ENCODE measurements at regions of chr2 and their contacts with region 1.

Region 1: DNA sequence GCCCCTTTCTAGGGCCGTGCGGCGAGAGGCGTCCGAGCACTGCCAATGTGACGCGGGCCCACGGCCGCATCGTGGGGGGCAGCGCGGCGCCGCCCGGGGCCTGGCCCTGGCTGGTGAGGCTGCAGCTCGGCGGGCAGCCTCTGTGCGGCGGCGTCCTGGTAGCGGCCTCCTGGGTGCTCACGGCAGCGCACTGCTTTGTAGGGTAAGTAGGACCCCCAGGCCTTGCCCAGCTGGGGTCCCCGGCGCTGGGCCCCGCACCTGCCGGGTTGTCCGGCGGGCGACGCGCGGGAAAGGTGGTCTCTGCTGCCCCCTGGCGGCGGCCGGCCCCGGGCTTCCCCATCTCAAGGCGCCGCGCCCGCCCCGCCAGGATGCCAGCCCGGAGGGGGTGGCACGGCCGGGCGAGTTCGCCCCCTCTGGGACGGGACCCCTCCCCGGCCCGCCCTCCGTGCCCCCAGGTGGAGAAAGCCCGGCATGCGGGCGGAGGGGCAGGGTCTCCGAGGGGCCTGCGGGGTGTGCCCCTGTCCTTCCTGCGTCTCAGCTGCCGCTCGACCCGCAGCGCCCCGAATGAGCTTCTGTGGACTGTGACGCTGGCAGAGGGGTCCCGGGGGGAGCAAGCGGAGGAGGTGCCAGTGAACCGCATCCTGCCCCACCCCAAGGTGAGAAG is 1.9 kb downstream of the PRSS56 start:
- DNase-seq: peak in 1 of 2 experiments; percentile 94
- H3K4me3 ChIP-seq: peak overlapping the region in 3 of 4 experiments; percentile 23 to 55 (median 32); a peak in 6 of 8 replicates
- H3K27ac ChIP-seq: no peak overlapping the region
- H3K4me1 ChIP-seq: peaks cover 0 to 22% (median 9%) of the 10 kb centered on the region in 4 experiments; a peak in 6 of 7 replicates
- H3K27me3 ChIP-seq: peaks cover 19 to 43% (median 37%) of the 10 kb centered on the region in 4 experiments
- CTCF ChIP-seq: peak in 2 of 3 experiments; percentile 56 to 88; a peak in 3 of 4 replicates
- EP300 ChIP-seq: no peak
- POLR2A ChIP-seq: no peak
- RAD21 ChIP-seq: peak; percentile 79 to 90

Region 2: GRCh38 chr2:232333361-232334270 is 188.5 kb before region 1 on chr2:
- CTCF ChIA-PET with region 1: interaction called, 10 read pairs
- POLR2A ChIA-PET with region 1: no interaction called
- DNase-seq: peak in 1 of 2 experiments; percentile 76
- H3K4me3 ChIP-seq: no peak overlapping the region
- H3K27ac ChIP-seq: no peak overlapping the region
- H3K4me1 ChIP-seq: peaks cover 0 to 9% (median 6%) of the 10 kb centered on the region in 4 experiments; a peak in 4 of 7 replicates
- H3K27me3 ChIP-seq: no peaks in the 10 kb centered on the region
- CTCF ChIP-seq: peak in 2 of 3 experiments; percentile 65 to 69; a peak in 3 of 4 replicates
- EP300 ChIP-seq: no peak
- POLR2A ChIP-seq: no peak
- RAD21 ChIP-seq: no peak; a peak in 1 of 4 replicates

Region 3: GRCh38 chr2:232444409-232445148 is 77.5 kb before region 1 on chr2:
- CTCF ChIA-PET with region 1: interaction called, 108 read pairs
- POLR2A ChIA-PET with region 1: interaction called, 5 read pairs
- DNase-seq: peak; percentile 44 to 82
- H3K4me3 ChIP-seq: no peak overlapping the region
- H3K27ac ChIP-seq: no peak overlapping the region
- H3K4me1 ChIP-seq: peaks cover 0 to 12% (median 5%) of the 10 kb centered on the region in 4 experiments; a peak in 5 of 7 replicates
- H3K27me3 ChIP-seq: no peaks in the 10 kb centered on the region; a peak in 2 of 7 replicates
- CTCF ChIP-seq: peak; percentile 70 to 88 (median 80)
- EP300 ChIP-seq: no peak
- POLR2A ChIP-seq: no peak
- RAD21 ChIP-seq: peak in 1 of 2 experiments; percentile 38; a peak in 2 of 4 replicates

Region 4: GRCh38 chr2:232458661-232459418 is 63.3 kb before region 1 on chr2:
- CTCF ChIA-PET with region 1: interaction called, 54 read pairs
- POLR2A ChIA-PET with region 1: interaction called, 3 read pairs
- DNase-seq: no peak
- H3K4me3 ChIP-seq: no peak overlapping the region
- H3K27ac ChIP-seq: no peak overlapping the region
- H3K4me1 ChIP-seq: peaks cover 0 to 3% (median 0%) of the 10 kb centered on the region in 4 experiments; a peak in 1 of 7 replicates
- H3K27me3 ChIP-seq: no peaks in the 10 kb centered on the region
- CTCF ChIP-seq: no peak
- EP300 ChIP-seq: no peak
- POLR2A ChIP-seq: no peak
- RAD21 ChIP-seq: no peak

Region 5: DNA sequence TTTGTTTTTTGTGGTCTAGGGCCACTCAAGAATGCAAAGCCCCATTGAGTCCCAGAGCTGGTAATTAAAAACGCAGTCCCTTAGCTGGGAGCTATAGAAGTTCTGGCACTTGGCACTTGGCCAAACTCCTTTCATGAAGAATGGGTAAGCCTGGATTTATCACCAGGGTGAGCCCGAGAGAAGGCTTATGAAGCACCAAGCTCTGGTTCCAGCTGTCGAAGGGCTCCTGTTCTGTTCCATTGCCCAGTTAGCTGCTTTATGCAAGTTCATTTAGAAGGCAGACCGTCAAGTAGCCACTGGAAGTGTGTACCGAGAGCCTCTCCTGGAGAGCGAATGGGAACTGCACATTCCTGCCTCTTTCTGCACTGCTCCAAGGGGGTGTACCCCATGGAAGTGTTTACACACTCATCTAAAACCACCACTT is 48.6 kb before region 1 on chr2:
- CTCF ChIA-PET with region 1: interaction called, 24 read pairs
- POLR2A ChIA-PET with region 1: no interaction called
- DNase-seq: no peak
- H3K4me3 ChIP-seq: no peak overlapping the region
- H3K27ac ChIP-seq: no peak overlapping the region
- H3K4me1 ChIP-seq: no peaks in the 10 kb centered on the region; a peak in 1 of 7 replicates
- H3K27me3 ChIP-seq: no peaks in the 10 kb centered on the region; a peak in 1 of 7 replicates
- CTCF ChIP-seq: no peak
- EP300 ChIP-seq: no peak
- POLR2A ChIP-seq: no peak
- RAD21 ChIP-seq: no peak

Region 6: DNA sequence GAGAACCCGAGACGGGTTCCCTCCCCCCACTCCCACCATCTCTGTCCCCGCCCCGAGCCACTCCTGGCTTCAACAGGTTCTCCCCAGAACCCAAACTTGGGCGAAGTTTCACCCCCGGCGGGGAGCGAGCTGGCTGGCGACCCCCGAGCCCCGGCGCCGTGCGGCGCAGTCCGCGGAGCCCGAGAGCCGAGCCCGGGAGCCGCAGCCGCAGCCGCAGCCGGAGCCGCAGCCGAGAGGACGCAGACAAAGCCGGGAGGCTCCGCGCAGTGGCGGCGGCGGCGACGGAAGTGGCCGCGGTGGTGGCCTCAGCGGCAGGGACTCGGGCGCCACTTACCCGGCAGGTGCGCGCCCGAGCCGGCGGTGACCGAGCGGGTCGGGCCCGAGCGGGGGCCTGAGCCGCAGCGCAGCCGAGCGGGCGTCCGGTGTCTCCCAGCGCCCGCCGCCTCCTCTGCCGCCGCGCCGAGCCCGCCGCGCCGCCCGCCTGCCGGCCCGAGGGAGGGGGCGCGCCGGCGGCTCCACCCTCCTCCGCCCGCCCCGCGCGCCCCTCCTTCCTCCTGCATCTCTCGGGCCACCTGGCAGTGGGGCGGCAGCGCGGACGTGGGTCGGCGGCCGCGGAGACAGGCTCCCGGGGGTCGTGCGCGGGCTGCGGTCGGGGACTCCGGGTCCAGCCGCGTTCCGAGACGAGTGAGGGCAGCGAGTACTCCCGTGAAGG is 34.5 kb before region 1 on chr2 and contains the start of gene ECEL1:
- CTCF ChIA-PET with region 1: interaction called, 32 read pairs
- POLR2A ChIA-PET with region 1: interaction called, 4 read pairs
- DNase-seq: peak in 1 of 2 experiments; percentile 71
- H3K4me3 ChIP-seq: peak within 1 kb of the TSS; percentile 26 to 62 (median 28)
- H3K27ac ChIP-seq: no peak within 1 kb of the TSS
- H3K4me1 ChIP-seq: peaks cover 0 to 40% (median 22%) of the 10 kb centered on the region in 4 experiments; a peak in 6 of 7 replicates
- H3K27me3 ChIP-seq: peaks cover 35 to 58% (median 50%) of the 10 kb centered on the region in 4 experiments
- CTCF ChIP-seq: no peak
- EP300 ChIP-seq: no peak
- POLR2A ChIP-seq: no peak
- RAD21 ChIP-seq: no peak
- total RNA-seq, gene ECEL1: 6.5 and 7.7 TPM in 2 replicates

Region 7: GRCh38 chr2:232502911-232503808 is 18.9 kb before region 1 on chr2:
- CTCF ChIA-PET with region 1: interaction called, 176 read pairs
- POLR2A ChIA-PET with region 1: interaction called, 5 read pairs
- DNase-seq: peak in 1 of 2 experiments; percentile 84
- H3K4me3 ChIP-seq: peak overlapping the region; percentile 39 to 84 (median 56)
- H3K27ac ChIP-seq: no peak overlapping the region
- H3K4me1 ChIP-seq: peaks cover 0 to 27% (median 17%) of the 10 kb centered on the region in 4 experiments; a peak in 6 of 7 replicates
- H3K27me3 ChIP-seq: peaks cover 15 to 48% (median 43%) of the 10 kb centered on the region in 4 experiments
- CTCF ChIP-seq: no peak
- EP300 ChIP-seq: no peak
- POLR2A ChIP-seq: no peak
- RAD21 ChIP-seq: no peak

Region 8: DNA sequence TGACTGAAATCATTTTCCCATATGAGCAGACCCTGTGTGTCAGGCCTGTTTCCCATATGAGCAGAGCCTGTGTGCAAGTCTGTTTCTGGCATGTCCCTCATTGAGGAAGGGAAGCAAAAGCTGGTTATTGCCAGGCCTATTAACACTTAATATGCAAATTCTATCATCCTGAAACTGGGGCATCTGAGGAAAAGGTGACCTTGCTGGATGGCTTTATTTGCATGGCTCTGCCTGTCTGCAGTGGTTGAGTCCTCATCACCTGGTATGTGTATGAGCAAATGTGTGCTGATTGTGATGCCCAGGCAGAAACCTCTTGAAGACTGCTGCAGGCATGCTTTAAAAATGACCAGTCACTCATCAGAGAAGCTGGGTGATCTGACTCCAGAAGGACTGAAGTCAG is 59.6 kb after region 1 on chr2:
- CTCF ChIA-PET with region 1: no interaction called
- POLR2A ChIA-PET with region 1: no interaction called
- DNase-seq: no peak
- H3K4me3 ChIP-seq: no peak overlapping the region
- H3K27ac ChIP-seq: no peak overlapping the region
- H3K4me1 ChIP-seq: no peaks in the 10 kb centered on the region
- H3K27me3 ChIP-seq: no peaks in the 10 kb centered on the region
- CTCF ChIP-seq: no peak
- EP300 ChIP-seq: no peak
- POLR2A ChIP-seq: no peak
- RAD21 ChIP-seq: no peak